Body of pancreas (tissue), 4 donors: ENCODE measurements at regions of chr9 and their contacts with region 1.

Region 1: GRCh38 chr9:32426278-32426939 is 42.0 kb downstream of the ACO1 start:
- DNase-seq: peak; percentile 71 to 91 (median 82)
- ATAC-seq: peak; percentile 90
- H3K4me3 ChIP-seq: no peak overlapping the region
- H3K27ac ChIP-seq: peak overlapping the region; percentile 59 to 87 (median 78)
- H3K4me1 ChIP-seq: peaks cover 19% of the 10 kb centered on the region
- H3K27me3 ChIP-seq: no peaks in the 10 kb centered on the region
- CTCF ChIP-seq: no peak
- POLR2A ChIP-seq: peak in 2 of 3 donors; percentile 13 to 20

Region 2: GRCh38 chr9:32011049-32011448 is 415.4 kb before region 1 on chr9:
- intact Hi-C with region 1: no loop called
- DNase-seq: no peak
- ATAC-seq: no peak
- H3K4me3 ChIP-seq: no peak overlapping the region
- H3K27ac ChIP-seq: no peak overlapping the region
- H3K4me1 ChIP-seq: no peaks in the 10 kb centered on the region
- H3K27me3 ChIP-seq: no peaks in the 10 kb centered on the region
- CTCF ChIP-seq: no peak
- POLR2A ChIP-seq: no peak

Region 3: DNA sequence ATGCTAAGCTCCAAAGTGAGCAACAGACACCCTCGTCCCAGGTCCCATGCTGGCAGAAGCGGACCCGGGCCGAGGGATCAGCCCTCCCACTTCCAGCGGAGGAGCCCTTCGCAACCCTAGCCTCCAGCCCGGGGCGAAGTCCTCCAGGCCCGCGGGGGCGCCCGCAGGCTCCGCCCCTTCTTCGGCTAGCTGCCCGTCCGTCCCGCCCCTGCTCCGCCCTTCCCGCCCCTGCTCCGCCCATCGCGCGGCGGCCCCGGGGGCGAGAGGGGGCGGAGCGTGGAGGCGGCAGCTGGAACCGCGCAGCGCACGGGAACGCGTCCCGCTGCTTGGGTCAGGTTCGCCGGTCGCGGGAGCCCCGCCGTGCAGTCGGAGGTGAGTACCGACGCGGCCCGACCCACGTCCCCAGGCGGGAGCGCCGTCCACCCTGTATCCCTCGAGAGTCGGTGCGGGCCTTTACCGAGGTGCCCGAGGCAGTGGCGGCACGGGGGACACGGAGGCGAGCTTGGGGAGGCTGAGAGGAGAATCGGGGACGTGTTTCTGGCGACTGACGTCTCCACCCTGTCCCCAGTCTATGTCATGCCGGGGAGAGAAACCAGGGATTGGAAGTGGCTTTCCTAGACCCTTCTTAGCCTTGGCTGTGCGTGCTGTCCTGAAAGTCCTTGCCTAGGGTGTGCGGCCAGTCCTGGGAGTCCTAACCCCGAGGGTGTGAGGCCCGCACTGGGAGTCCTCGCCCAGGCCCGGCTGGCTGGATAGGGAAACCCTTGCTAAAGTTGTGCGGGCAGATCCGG is 41.9 kb before region 1 on chr9 and contains the start of gene ACO1:
- intact Hi-C with region 1: loop called (anchors 5 kb)
- DNase-seq: peak; percentile 93 to 95 (median 94)
- ATAC-seq: peak; percentile 96
- H3K4me3 ChIP-seq: peak within 1 kb of the TSS; percentile 35 to 67
- H3K27ac ChIP-seq: peak within 1 kb of the TSS; percentile 84 to 94 (median 92)
- H3K4me1 ChIP-seq: peaks cover 49% of the 10 kb centered on the region
- H3K27me3 ChIP-seq: no peaks in the 10 kb centered on the region
- CTCF ChIP-seq: peak in 1 of 7 experiments; percentile 25
- POLR2A ChIP-seq: peak; percentile 88 to 92 (median 89)
- total RNA-seq, gene ACO1: 48.8 to 51.1 TPM